ENCODE measurements at regions of chr22 and their contacts with region 1.

Region 1: GRCh38 chr22:17171313-17172171 is 12.5 kb upstream of the HDHD5 start:
- DNase-seq: peak; percentile 79 to 87
- ATAC-seq: peak; percentile 88 to 93
- H3K4me3 ChIP-seq: peak overlapping the region; percentile 52 to 91 (median 78)
- H3K27ac ChIP-seq: peak overlapping the region; percentile 88 to 100 (median 96)
- H3K4me1 ChIP-seq: peaks cover 10 to 22% of the 10 kb centered on the region in 2 donors
- H3K27me3 ChIP-seq: no peaks in the 10 kb centered on the region
- CTCF ChIP-seq: peak; percentile 87 to 99 (median 96)
- POLR2A ChIP-seq: peak; percentile 28 to 68

Region 2: GRCh38 chr22:17121227-17122195 is 50.0 kb before region 1 on chr22 and contains the start of gene TMEM121B:
- in situ Hi-C with region 1: no loop called
- intact Hi-C with region 1: loop called (anchors 1 kb)
- DNase-seq: peak; percentile 36 to 59
- ATAC-seq: peak; percentile 40 to 63
- H3K4me3 ChIP-seq: peak within 1 kb of the TSS; percentile 56 to 67 (median 60)
- H3K27ac ChIP-seq: peak within 1 kb of the TSS; percentile 24 to 51 (median 32)
- H3K4me1 ChIP-seq: peaks cover 12% of the 10 kb centered on the region in 2 donors
- H3K27me3 ChIP-seq: no peaks in the 10 kb centered on the region
- CTCF ChIP-seq: no peak
- POLR2A ChIP-seq: no peak
- total RNA-seq, gene TMEM121B: 0.17 to 0.29 (median 0.24) TPM

Region 3: DNA sequence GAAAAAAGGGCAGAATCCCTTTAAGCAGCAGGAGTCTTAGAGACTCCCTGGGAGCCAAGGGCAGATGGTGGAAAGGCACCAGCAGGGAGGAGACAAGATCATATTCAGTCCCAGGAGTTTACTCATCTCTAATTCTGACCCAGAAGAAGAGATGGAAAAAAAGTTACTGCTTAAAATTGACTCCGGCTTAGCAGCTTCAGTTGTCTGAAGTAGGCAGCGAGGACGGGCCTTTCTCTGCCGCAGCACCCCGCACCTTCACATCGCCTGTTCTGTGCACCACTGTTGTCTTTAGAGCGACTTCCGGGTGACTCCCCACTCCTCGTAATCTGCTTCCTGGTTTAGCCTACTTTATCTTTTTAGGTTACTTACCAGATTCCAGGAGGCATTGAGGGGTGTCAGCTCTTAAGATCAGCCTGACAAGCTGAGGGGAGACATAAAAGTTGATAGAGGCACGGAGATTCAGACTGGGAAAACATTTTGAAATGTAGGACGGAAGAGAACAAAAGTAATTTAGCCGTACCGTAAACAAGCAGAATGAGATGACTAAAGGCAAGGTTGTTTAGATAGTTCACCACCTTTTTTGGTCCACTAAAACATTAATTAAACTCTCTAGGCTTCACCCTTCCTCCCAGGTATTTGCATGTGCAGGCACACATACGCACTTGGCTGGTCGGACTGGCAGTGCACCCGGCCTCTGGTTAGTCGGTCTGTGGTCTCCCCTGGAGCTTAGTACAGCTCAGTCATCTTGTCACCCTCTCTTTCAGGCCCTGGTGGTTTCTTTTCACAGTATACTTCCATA is 272.1 kb after region 1 on chr22:
- in situ Hi-C with region 1: no loop called
- intact Hi-C with region 1: loop called (anchors 5 kb)
- DNase-seq: peak; percentile 29 to 70
- ATAC-seq: peak; percentile 86 to 87
- H3K4me3 ChIP-seq: peak overlapping the region; percentile 42 to 50 (median 42)
- H3K27ac ChIP-seq: peak overlapping the region; percentile 90 to 96 (median 94)
- H3K4me1 ChIP-seq: peaks cover 42 to 60% of the 10 kb centered on the region in 2 donors
- H3K27me3 ChIP-seq: no peaks in the 10 kb centered on the region
- CTCF ChIP-seq: no peak
- POLR2A ChIP-seq: peak in 1 of 2 donors; percentile 71

Region 4: DNA sequence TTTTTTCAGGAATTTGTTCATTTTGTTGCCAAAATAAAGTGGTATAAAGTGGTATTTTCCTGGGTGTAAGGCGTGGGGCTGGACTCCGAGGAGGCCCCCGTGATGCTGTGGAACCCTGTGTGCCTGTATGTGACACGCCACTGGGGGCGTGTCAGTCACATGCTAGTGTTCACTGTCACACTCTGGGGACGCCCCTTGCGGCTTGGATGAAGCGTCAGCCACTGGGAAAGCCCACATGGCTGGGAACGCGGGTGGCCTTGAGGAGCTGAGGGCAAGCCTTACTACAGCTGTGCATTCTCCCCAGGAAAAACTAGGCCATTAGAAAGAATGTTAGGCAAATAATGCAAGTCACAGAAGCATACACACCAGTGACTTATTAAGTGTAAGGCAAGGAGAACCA is 314.8 kb after region 1 on chr22:
- in situ Hi-C with region 1: loop called in 1 of 4 experiments (anchors 25 kb)
- intact Hi-C with region 1: loop called (anchors 5 kb)
- DNase-seq: peak; percentile 13 to 52
- ATAC-seq: peak in 1 of 2 donors; percentile 9
- H3K4me3 ChIP-seq: no peak overlapping the region
- H3K27ac ChIP-seq: peak overlapping the region; percentile 80 to 88 (median 86)
- H3K4me1 ChIP-seq: peaks cover 32 to 38% of the 10 kb centered on the region in 2 donors
- H3K27me3 ChIP-seq: no peaks in the 10 kb centered on the region
- CTCF ChIP-seq: no peak
- POLR2A ChIP-seq: no peak

Region 5: GRCh38 chr22:17628304-17629166 is 457.0 kb after region 1 on chr22 and contains the start of gene ATP6V1E1:
- in situ Hi-C with region 1: loop called in 1 of 4 experiments (anchors 25 kb)
- intact Hi-C with region 1: no loop called
- DNase-seq: peak; percentile 97 to 98
- ATAC-seq: peak; percentile 96 to 98
- H3K4me3 ChIP-seq: peak within 1 kb of the TSS; percentile 90 to 100 (median 94)
- H3K27ac ChIP-seq: peak within 1 kb of the TSS; percentile 94 to 99 (median 98)
- H3K4me1 ChIP-seq: peaks cover 17 to 27% of the 10 kb centered on the region in 2 donors
- H3K27me3 ChIP-seq: no peaks in the 10 kb centered on the region
- CTCF ChIP-seq: no peak
- POLR2A ChIP-seq: peak; percentile 90 to 93
- total RNA-seq, gene ATP6V1E1: 243 to 279 (median 250) TPM